ENCODE measurements at regions of chr1 and their contacts with region 1.

Region 1: GRCh38 chr1:100866041-100866900 is 28.4 kb downstream of the EXTL2 start:
- DNase-seq: no peak
- ATAC-seq: peak in 1 of 2 donors; percentile 44
- H3K4me3 ChIP-seq: no peak overlapping the region
- H3K27ac ChIP-seq: no peak overlapping the region
- H3K4me1 ChIP-seq: peaks cover 0 to 4% of the 10 kb centered on the region in 2 donors
- H3K27me3 ChIP-seq: no peaks in the 10 kb centered on the region
- CTCF ChIP-seq: peak in 4 of 5 experiments; percentile 26 to 46 (median 41)
- POLR2A ChIP-seq: no peak

Region 2: DNA sequence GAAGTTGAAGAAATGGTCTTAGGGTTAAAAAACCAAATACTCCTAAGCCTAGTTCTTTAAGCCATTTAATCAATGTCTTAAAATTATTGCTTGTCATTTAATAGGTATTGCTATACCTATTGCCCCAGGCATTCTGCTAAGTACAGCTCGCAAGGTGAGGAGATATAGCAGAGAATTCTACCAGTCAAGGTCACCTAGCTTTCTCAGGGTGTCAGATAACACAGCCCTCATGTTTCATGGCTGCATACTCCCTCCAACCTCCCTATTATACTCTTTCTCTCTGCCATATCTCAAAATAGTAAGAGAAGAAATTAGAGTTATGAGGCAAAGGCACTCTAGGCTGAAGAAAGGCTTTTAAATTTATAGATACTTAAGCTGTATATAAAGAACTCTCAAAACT is 396.7 kb before region 1 on chr1:
- in situ Hi-C with region 1: loop called in 2 of 4 experiments (anchors 5 to 25 kb)
- intact Hi-C with region 1: no loop called
- DNase-seq: no peak
- ATAC-seq: peak in 1 of 2 donors; percentile 81
- H3K4me3 ChIP-seq: no peak overlapping the region
- H3K27ac ChIP-seq: no peak overlapping the region
- H3K4me1 ChIP-seq: peaks cover 13 to 14% of the 10 kb centered on the region in 2 donors
- H3K27me3 ChIP-seq: no peaks in the 10 kb centered on the region
- CTCF ChIP-seq: no peak
- POLR2A ChIP-seq: no peak

Region 3: DNA sequence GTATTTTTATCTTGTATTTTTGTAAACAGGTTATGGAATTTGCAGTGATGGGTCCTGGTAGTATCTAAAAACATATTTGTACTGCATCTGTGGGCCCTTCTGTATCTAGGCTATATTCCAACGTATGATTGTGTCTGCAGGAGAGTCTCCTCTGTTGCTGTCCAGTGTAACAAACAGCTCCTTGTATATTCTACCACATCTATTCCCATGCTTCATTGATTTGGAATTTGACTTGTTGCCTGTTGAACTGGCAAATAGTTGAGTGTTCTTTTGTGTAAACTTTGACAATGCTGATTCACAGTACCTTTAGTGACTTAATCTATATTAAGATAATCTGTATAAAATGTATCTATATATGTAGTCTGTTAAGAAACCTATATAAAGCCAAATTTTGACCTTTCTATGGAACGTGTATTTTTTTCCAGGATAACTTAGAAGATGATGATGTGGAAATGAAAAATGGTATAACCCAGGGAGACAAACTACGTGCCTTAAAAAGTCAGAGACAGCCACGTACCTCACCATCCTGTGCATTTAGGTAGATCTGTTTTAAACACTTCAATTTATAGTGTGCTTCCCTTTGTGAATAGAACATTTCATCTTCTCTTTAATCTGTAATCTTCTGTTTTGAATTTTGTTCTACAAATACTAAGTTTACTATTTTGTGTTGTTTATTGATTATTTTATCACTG is 371.7 kb before region 1 on chr1:
- in situ Hi-C with region 1: loop called in 1 of 4 experiments (anchors 25 kb)
- intact Hi-C with region 1: no loop called
- DNase-seq: no peak
- ATAC-seq: no peak
- H3K4me3 ChIP-seq: no peak overlapping the region
- H3K27ac ChIP-seq: no peak overlapping the region
- H3K4me1 ChIP-seq: no peaks in the 10 kb centered on the region
- H3K27me3 ChIP-seq: no peaks in the 10 kb centered on the region
- CTCF ChIP-seq: no peak
- POLR2A ChIP-seq: no peak

Region 4: GRCh38 chr1:100606438-100606837 is 259.8 kb before region 1 on chr1:
- in situ Hi-C with region 1: loop called in 3 of 4 experiments (anchors 5 to 25 kb)
- intact Hi-C with region 1: loop called (anchors 5 kb)
- DNase-seq: no peak
- ATAC-seq: no peak
- H3K4me3 ChIP-seq: no peak overlapping the region
- H3K27ac ChIP-seq: no peak overlapping the region
- H3K4me1 ChIP-seq: no peaks in the 10 kb centered on the region
- H3K27me3 ChIP-seq: peaks cover 0 to 4% (median 0%) of the 10 kb centered on the region in 3 donors
- CTCF ChIP-seq: peak in 1 of 5 experiments; percentile 39
- POLR2A ChIP-seq: no peak

Region 5: GRCh38 chr1:100847361-100848082 is 18.7 kb before region 1 on chr1:
- in situ Hi-C with region 1: no loop called
- intact Hi-C with region 1: no loop called
- DNase-seq: no peak
- ATAC-seq: no peak
- H3K4me3 ChIP-seq: peak overlapping the region in 2 of 4 donors; percentile 10 to 23
- H3K27ac ChIP-seq: peak overlapping the region in 1 of 4 donors; percentile 32
- H3K4me1 ChIP-seq: no peaks in the 10 kb centered on the region
- H3K27me3 ChIP-seq: no peaks in the 10 kb centered on the region
- CTCF ChIP-seq: no peak
- POLR2A ChIP-seq: no peak